CD4-positive, alpha-beta T cell (primary cell): ENCODE measurements at regions of chr2 and their contacts with region 1.

Region 1: DNA sequence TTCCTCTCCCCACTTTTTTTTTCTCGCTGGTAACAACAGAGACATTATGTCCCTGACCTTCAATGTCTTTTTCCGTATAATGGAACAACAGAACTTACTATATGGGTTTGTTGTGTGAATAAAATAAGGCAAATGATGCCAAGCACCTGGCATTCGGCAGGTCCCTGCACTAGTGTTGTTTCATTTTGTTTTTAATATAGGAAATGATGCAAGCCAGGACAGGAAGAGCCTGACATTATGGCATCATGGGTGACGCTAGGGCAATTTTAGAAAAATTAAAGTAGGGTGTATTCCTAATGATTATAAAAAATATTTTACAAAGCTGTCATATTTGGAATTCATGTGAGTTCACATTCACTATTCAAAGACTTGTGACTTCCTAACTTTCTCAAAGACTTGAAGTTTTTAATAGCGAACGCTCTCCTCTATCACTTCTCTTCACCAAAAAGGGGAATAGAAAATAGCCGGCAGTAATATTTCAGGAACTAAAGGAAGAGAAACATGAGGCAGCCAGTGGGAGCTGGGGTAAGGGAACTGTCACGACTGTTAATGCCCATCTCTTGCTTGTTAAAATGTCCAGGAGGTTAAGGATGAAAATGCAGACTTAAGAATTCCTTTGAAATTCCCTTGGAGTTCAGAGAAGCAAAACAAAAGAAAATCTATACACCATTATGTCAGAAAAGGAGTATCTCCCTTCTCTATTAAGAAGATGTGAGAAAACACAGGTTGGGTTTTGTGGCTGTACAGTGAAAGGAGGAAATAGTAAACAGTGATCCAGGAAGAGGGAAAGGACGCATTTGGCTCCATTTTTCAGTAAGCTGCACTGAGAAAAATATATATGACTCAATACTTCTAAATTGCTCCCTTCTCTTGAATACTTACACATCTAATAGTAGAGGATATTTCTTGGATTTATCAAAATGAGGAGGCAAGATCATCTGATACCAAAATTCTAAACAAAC is 60.2 kb downstream of the DPP4 start:
- DNase-seq: peak in 3 of 14 experiments; percentile 60 to 65 (median 61)
- ATAC-seq: peak; percentile 36
- H3K4me3 ChIP-seq: no peak overlapping the region
- H3K4me3 Mint-ChIP-seq: peak overlapping the region; percentile 83
- H3K27ac ChIP-seq: peak overlapping the region; percentile 82 to 87
- H3K27ac Mint-ChIP-seq: peak overlapping the region; percentile 86
- H3K4me1 ChIP-seq: peaks cover 34% of the 10 kb centered on the region
- H3K4me1 Mint-ChIP-seq: peaks cover 76% of the 10 kb centered on the region
- H3K27me3 ChIP-seq: no peaks in the 10 kb centered on the region
- H3K27me3 Mint-ChIP-seq: no peaks in the 10 kb centered on the region
- CTCF ChIP-seq: no peak

Region 2: GRCh38 chr2:161886248-161886647 is 127.5 kb before region 1 on chr2:
- CTCF ChIA-PET with region 1: no interaction called
- POLR2A ChIA-PET with region 1: no interaction called
- intact Hi-C with region 1: no loop called
- DNase-seq: no peak
- ATAC-seq: no peak
- H3K4me3 ChIP-seq: no peak overlapping the region
- H3K4me3 Mint-ChIP-seq: no peak overlapping the region
- H3K27ac ChIP-seq: no peak overlapping the region
- H3K27ac Mint-ChIP-seq: no peak overlapping the region
- H3K4me1 ChIP-seq: no peaks in the 10 kb centered on the region
- H3K4me1 Mint-ChIP-seq: no peaks in the 10 kb centered on the region
- H3K27me3 ChIP-seq: no peaks in the 10 kb centered on the region
- H3K27me3 Mint-ChIP-seq: peaks cover 12% of the 10 kb centered on the region
- CTCF ChIP-seq: no peak

Region 3: GRCh38 chr2:161954103-161954502 is 59.7 kb before region 1 on chr2:
- CTCF ChIA-PET with region 1: interaction called, 3 read pairs
- POLR2A ChIA-PET with region 1: interaction called, 22 read pairs
- intact Hi-C with region 1: no loop called
- DNase-seq: peak in 4 of 14 experiments; percentile 34 to 80 (median 74)
- ATAC-seq: peak; percentile 76
- H3K4me3 ChIP-seq: no peak overlapping the region
- H3K4me3 Mint-ChIP-seq: peak overlapping the region; percentile 12
- H3K27ac ChIP-seq: no peak overlapping the region
- H3K27ac Mint-ChIP-seq: peak overlapping the region; percentile 1
- H3K4me1 ChIP-seq: peaks cover 33% of the 10 kb centered on the region
- H3K4me1 Mint-ChIP-seq: peaks cover 52% of the 10 kb centered on the region
- H3K27me3 ChIP-seq: no peaks in the 10 kb centered on the region
- H3K27me3 Mint-ChIP-seq: no peaks in the 10 kb centered on the region
- CTCF ChIP-seq: no peak

Region 4: GRCh38 chr2:161992526-161992925 is 21.3 kb before region 1 on chr2:
- CTCF ChIA-PET with region 1: interaction called, 3 read pairs
- POLR2A ChIA-PET with region 1: interaction called, 15 read pairs
- intact Hi-C with region 1: loop called in 1 of 2 experiments (anchors 2 kb)
- DNase-seq: peak; percentile 18 to 83 (median 44)
- ATAC-seq: peak; percentile 75
- H3K4me3 ChIP-seq: peak overlapping the region; percentile 27
- H3K4me3 Mint-ChIP-seq: peak overlapping the region; percentile 88
- H3K27ac ChIP-seq: peak overlapping the region; percentile 65 to 78
- H3K27ac Mint-ChIP-seq: peak overlapping the region; percentile 94
- H3K4me1 ChIP-seq: peaks cover 34% of the 10 kb centered on the region
- H3K4me1 Mint-ChIP-seq: peaks cover 51% of the 10 kb centered on the region
- H3K27me3 ChIP-seq: no peaks in the 10 kb centered on the region
- H3K27me3 Mint-ChIP-seq: no peaks in the 10 kb centered on the region
- CTCF ChIP-seq: no peak

Region 5: DNA sequence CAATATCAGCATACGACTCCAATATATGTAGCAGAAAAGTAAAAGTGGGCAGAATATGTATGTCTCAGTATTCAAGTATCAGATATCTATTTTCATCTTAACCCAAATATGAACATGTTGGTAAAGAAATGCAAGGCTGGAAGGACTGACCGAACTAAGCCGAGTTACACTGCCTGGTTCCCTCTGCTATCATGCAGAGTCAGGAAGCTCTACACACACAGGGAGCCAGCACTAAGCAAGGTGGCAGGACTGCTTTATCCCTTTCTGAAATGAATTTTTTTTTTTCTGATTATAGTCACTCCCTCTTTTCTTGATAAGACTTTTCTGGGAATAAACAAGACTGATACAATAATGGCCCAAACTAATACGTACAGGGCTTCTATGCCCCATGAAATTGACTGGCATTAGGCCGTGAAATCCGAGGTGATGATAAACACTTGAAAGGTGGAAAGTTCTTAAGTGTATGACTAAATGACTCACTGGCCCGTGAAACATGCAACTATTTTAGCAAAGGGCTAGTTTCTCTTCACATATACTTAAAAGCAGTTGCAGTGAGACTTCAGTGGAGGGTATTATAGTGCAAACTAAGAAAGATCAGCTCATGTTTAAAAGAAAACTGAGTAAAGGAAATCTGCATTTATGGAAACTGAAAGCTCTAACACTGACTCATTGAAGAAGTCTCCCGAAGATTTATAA is 45.3 kb after region 1 on chr2:
- CTCF ChIA-PET with region 1: no interaction called
- POLR2A ChIA-PET with region 1: interaction called, 13 read pairs
- intact Hi-C with region 1: loop called in 1 of 2 experiments (anchors 5 kb)
- DNase-seq: peak in 4 of 14 experiments; percentile 25 to 40 (median 32)
- ATAC-seq: peak; percentile 34
- H3K4me3 ChIP-seq: peak overlapping the region; percentile 41
- H3K4me3 Mint-ChIP-seq: peak overlapping the region; percentile 75
- H3K27ac ChIP-seq: peak overlapping the region in 1 of 2 donors; percentile 37
- H3K27ac Mint-ChIP-seq: peak overlapping the region; percentile 77
- H3K4me1 ChIP-seq: peaks cover 48% of the 10 kb centered on the region
- H3K4me1 Mint-ChIP-seq: peaks cover 85% of the 10 kb centered on the region
- H3K27me3 ChIP-seq: no peaks in the 10 kb centered on the region
- H3K27me3 Mint-ChIP-seq: no peaks in the 10 kb centered on the region
- CTCF ChIP-seq: no peak

Region 6: GRCh38 chr2:162065767-162066166 is 52.0 kb after region 1 on chr2:
- CTCF ChIA-PET with region 1: no interaction called
- POLR2A ChIA-PET with region 1: interaction called, 13 read pairs
- intact Hi-C with region 1: loop called in 1 of 2 experiments (anchors 5 kb)
- DNase-seq: no peak
- ATAC-seq: no peak
- H3K4me3 ChIP-seq: no peak overlapping the region
- H3K4me3 Mint-ChIP-seq: no peak overlapping the region
- H3K27ac ChIP-seq: no peak overlapping the region
- H3K27ac Mint-ChIP-seq: peak overlapping the region; percentile 63
- H3K4me1 ChIP-seq: peaks cover 31% of the 10 kb centered on the region
- H3K4me1 Mint-ChIP-seq: peaks cover 71% of the 10 kb centered on the region
- H3K27me3 ChIP-seq: no peaks in the 10 kb centered on the region
- H3K27me3 Mint-ChIP-seq: no peaks in the 10 kb centered on the region
- CTCF ChIP-seq: no peak

Region 7: DNA sequence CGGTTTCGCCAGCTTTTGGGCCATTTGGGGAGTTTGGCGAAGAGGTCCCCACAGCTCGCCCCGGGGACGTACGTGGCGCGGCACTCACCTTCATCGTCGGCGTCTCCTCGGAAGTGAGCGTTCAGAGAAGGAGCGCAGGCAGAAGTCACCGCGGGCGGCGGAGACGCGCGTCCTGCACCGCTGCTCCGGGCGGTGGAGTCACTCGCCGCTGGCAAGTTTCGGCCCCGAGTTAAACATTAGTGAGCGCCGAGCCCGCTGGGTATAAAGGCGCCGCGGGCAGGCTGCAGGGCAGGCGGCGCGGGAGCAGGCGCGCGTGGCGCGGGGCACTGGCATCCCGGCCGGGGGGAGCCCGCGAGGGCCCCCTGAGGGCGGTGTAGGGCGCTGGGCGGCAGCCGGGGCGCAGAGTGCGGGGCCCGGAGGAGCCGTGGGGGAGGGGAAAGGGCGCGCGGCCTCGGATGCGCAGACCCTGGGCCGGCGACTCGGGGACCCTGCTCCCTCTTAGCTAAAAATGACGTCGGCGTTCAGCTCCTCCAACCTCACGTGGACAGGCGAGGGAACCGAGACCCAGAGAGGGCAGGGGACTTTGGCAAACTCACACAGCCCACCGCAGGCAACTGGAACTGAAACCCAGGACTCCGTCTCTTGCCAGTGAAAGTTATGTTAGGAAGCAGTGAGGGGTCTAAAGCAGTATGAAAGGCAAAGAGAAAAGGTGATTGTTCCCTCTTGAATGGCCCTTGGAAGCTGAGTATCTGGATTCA is 60.3 kb after region 1 on chr2 and contains the start of gene DPP4:
- CTCF ChIA-PET with region 1: interaction called, 3 read pairs
- POLR2A ChIA-PET with region 1: interaction called, 48 read pairs
- intact Hi-C with region 1: loop called in 1 of 2 experiments (anchors 5 kb)
- DNase-seq: peak; percentile 21 to 78 (median 48)
- ATAC-seq: peak; percentile 80
- H3K4me3 ChIP-seq: peak within 1 kb of the TSS; percentile 85
- H3K4me3 Mint-ChIP-seq: peak within 1 kb of the TSS; percentile 95
- H3K27ac ChIP-seq: peak within 1 kb of the TSS; percentile 57 to 60
- H3K27ac Mint-ChIP-seq: peak within 1 kb of the TSS; percentile 85
- H3K4me1 ChIP-seq: peaks cover 23% of the 10 kb centered on the region
- H3K4me1 Mint-ChIP-seq: peaks cover 52% of the 10 kb centered on the region
- H3K27me3 ChIP-seq: no peaks in the 10 kb centered on the region
- H3K27me3 Mint-ChIP-seq: no peaks in the 10 kb centered on the region
- CTCF ChIP-seq: no peak
- total RNA-seq, gene DPP4: 15.5 to 16.7 TPM